Mammary epithelial cell (primary cell): ENCODE measurements at regions of chr17 and their contacts with region 1.

Region 1: GRCh38 chr17:3575511-3575910 is 17.9 kb upstream of the TRPV3 start:
- DNase-seq: peak; percentile 96
- H3K4me3 ChIP-seq: no peak overlapping the region
- H3K27ac ChIP-seq: peak overlapping the region; percentile 68
- H3K4me1 ChIP-seq: peaks cover 14% of the 10 kb centered on the region
- H3K27me3 ChIP-seq: no peaks in the 10 kb centered on the region
- CTCF ChIP-seq: no peak

Region 2: GRCh38 chr17:3474212-3474611 is 101.3 kb before region 1 on chr17:
- CTCF ChIA-PET with region 1: no interaction called
- dilution Hi-C with region 1: no loop called
- in situ Hi-C with region 1: no loop called
- intact Hi-C with region 1: no loop called
- DNase-seq: no peak
- H3K4me3 ChIP-seq: no peak overlapping the region
- H3K27ac ChIP-seq: no peak overlapping the region
- H3K4me1 ChIP-seq: no peaks in the 10 kb centered on the region
- H3K27me3 ChIP-seq: no peaks in the 10 kb centered on the region
- CTCF ChIP-seq: no peak

Region 3: GRCh38 chr17:3602499-3602898 is 27.0 kb after region 1 on chr17:
- CTCF ChIA-PET with region 1: no interaction called
- dilution Hi-C with region 1: no loop called
- in situ Hi-C with region 1: no loop called
- intact Hi-C with region 1: loop called (anchors 1 kb)
- DNase-seq: no peak
- H3K4me3 ChIP-seq: no peak overlapping the region
- H3K27ac ChIP-seq: no peak overlapping the region
- H3K4me1 ChIP-seq: peaks cover 17% of the 10 kb centered on the region
- H3K27me3 ChIP-seq: no peaks in the 10 kb centered on the region
- CTCF ChIP-seq: peak; percentile 27 to 48

Region 4: DNA sequence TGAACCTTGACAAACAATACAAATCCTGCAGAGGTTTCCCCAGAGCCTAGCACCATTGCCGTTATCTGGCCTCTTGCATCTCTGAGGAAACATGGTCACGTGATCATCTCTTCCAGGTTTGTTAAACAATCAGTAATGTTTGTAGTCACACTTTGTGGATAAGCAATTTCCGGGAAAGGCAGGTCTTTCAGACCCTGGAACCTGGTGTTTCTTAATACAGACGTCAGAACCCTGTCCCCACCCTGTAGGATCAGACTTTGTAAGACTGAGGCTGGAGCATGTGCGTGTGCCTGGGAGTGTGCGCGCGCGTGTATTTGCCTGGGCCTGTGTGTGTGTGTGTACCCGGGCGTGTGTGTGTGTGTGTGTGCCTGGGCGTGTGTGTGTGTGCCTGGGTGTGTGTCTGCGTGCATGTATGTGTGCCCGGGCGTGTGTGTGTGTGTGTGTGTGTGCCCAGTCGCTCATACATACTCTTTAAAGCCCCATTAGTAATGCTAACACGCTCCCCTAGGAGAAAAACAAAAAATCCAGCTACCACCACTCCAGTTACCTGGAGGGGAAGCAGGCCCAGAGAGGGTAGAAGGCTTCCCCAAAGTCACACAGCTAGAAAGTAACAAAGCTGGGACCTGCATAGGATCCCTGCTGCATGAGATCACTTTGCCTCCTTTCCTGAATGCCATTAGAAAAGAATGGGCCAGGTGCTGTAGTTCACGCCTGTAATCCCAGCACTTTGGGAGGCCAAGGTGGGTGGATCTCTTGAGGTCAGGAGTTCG is 66.4 kb after region 1 on chr17:
- CTCF ChIA-PET with region 1: no interaction called
- dilution Hi-C with region 1: no loop called
- in situ Hi-C with region 1: no loop called
- intact Hi-C with region 1: no loop called
- DNase-seq: no peak
- H3K4me3 ChIP-seq: no peak overlapping the region
- H3K27ac ChIP-seq: no peak overlapping the region
- H3K4me1 ChIP-seq: peaks cover 3% of the 10 kb centered on the region
- H3K27me3 ChIP-seq: no peaks in the 10 kb centered on the region
- CTCF ChIP-seq: no peak